Right lobe of liver (tissue), 6 donors: ENCODE measurements at regions of chr22 and their contacts with region 1.

Region 1: DNA sequence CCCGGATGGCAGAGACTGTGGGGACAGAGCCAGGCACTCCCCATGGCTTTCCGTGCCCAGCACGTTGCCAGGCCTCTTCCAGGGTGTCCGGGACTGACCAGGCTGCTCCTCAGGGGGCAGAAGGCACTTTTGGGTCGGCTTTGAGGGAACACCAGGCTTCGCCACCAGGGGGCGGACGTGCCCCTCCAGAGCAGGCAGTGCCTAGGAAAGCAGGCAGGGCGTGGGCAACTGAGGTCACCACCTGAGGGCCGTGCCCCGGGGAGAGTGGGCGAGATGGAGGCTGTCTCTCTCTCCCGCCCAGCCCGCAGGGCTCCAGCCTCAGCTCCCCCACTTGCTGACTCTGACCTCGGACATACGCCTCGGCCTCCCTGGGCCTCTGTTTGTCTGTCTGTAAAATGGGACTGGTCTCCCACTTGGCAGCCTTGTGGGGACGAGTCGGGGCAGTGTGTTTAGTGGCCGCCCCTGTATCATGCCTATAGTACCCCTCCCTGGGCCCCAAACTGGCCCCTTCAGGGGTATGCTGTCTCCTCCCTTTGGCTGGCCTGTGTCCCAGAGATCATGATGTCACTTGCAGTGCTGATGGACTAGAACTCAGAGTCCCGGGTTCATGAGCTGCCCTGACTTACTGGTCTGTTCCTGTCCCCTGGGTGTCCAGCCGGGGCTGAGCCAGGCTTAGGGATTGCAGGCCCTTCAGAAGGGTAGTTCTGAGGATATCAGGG is 4.4 kb upstream of the PRR5 start:
- DNase-seq: peak; percentile 81 to 83 (median 83)
- ATAC-seq: peak; percentile 56 to 67 (median 62)
- H3K4me3 ChIP-seq: no peak overlapping the region
- H3K27ac ChIP-seq: no peak overlapping the region
- H3K4me1 ChIP-seq: peaks cover 0 to 6% (median 0%) of the 10 kb centered on the region in 4 donors
- H3K27me3 ChIP-seq: no peaks in the 10 kb centered on the region
- CTCF ChIP-seq: peak; percentile 91 to 96 (median 93)
- POLR2A ChIP-seq: no peak

Region 2: GRCh38 chr22:44554411-44554810 is 143.2 kb before region 1 on chr22:
- intact Hi-C with region 1: no loop called
- DNase-seq: peak in 1 of 3 donors; percentile 21
- ATAC-seq: no peak
- H3K4me3 ChIP-seq: no peak overlapping the region
- H3K27ac ChIP-seq: no peak overlapping the region
- H3K4me1 ChIP-seq: no peaks in the 10 kb centered on the region
- H3K27me3 ChIP-seq: no peaks in the 10 kb centered on the region
- CTCF ChIP-seq: no peak
- POLR2A ChIP-seq: no peak

Region 3: DNA sequence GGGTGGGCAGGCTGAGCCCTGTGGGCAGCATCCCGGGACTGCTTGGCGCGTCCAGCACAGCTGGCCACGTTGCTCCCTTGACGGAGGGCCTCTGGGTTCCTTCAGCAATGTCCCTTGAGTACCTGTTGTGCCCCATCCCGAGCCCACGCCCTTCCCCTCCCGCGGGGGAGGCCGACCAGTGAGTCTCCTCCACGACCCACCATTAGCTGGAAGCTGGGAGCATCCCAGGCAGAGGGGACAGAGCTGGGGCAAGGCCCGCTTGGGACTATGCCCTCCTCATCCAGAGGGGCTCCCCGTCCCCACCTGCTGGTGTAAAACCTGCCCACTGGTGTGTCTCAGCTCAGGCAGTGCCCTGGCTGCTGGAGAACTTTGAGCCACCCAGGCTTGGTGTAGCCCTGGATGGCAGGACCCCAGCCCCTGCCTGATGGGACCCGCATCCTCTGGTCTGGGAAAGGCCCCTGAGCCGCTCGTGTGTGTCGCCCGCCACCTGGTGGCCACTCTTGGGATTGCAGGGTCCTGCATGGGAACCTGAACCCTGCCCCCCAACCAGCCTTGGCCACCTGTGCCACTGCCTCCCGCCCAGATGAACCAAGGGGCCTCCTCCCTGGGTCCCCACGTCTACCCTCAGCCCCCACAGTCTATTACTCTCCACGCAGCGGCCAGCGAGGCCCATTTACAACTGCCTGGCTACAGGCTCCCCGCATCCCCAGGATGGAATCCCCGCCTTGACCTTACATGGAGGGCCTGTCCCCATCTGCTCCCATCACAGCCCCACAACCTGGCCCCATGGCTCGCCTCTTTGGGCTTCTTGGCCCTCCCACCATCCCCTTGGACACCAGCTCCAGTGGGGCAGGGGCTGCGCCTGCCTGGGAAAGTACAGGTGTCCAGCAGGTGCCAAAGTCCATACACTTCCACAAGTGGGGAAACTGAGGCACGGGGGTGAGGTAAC is 38.2 kb after region 1 on chr22:
- intact Hi-C with region 1: loop called (anchors 2 to 5 kb)
- DNase-seq: peak; percentile 82 to 85 (median 84)
- ATAC-seq: peak; percentile 66 to 82 (median 74)
- H3K4me3 ChIP-seq: no peak overlapping the region
- H3K27ac ChIP-seq: no peak overlapping the region
- H3K4me1 ChIP-seq: no peaks in the 10 kb centered on the region
- H3K27me3 ChIP-seq: no peaks in the 10 kb centered on the region
- CTCF ChIP-seq: peak; percentile 97 to 99 (median 98)
- POLR2A ChIP-seq: no peak